A673 (cell line): ENCODE measurements at regions of chr2 and their contacts with region 1.

Region 1: DNA sequence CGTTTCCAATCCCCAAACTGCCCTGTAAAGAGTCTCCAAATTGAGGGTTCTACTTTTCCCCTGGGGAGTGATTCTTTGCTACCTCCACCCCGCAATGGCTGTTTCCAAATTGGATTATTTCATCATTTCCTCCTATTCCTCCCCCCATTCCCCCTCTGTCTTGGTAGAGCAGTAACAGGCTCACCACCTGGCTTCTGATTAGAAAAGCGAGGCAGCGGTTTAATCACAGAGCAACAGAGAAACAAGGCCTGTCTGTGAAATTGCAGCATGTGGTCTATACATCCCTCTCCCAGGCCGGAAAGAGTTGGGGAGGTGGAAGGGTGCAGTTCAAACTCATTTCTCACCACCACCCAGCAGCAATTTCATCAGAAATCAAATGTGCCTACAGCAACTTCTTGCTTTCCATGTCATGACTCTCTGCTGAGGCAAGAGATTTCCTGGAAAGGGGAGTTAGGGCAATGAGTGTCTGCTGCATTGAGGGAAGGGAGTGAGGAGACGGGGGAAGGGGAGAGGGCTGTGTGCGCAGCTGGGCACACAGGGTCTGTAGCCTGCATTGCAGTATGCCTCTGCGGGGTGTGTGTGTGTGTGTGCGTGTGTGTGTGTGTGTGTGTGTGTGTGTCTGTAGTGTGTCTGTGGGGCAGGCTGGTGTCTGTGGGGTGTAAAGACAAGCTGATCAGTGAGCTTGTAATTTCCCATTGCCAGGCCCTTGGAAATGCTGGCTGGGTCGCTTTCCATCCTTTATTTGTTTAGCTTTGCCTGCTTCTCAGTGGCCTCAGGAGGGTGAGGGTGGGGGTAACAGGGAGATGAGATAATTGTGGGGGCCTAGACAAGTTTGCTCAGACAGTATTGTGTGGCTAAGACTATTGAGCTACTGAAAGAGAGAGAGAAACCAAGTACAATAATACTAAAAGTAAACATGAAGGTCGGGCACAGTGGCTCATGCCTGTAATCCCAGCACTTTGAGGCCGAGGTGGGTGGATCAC is 13.5 kb upstream of the IGFBP2 start:
- DNase-seq: peak; percentile 96
- H3K4me3 ChIP-seq: peak overlapping the region; percentile 30
- H3K27ac ChIP-seq: peak overlapping the region; percentile 98
- H3K4me1 ChIP-seq: peaks cover 65% of the 10 kb centered on the region
- H3K27me3 ChIP-seq: no peaks in the 10 kb centered on the region
- CTCF ChIP-seq: no peak

Region 2: GRCh38 chr2:216636551-216637450 is 17.1 kb after region 1 on chr2:
- CTCF ChIA-PET with region 1: interaction called, 12 read pairs
- POLR2A ChIA-PET with region 1: no interaction called
- intact Hi-C with region 1: no loop called
- DNase-seq: peak; percentile 88
- H3K4me3 ChIP-seq: peak overlapping the region; percentile 99
- H3K27ac ChIP-seq: peak overlapping the region; percentile 93
- H3K4me1 ChIP-seq: peaks cover 21% of the 10 kb centered on the region
- H3K27me3 ChIP-seq: no peaks in the 10 kb centered on the region
- CTCF ChIP-seq: no peak